ENCODE measurements at regions of chr5 and their contacts with region 1.

Region 1: GRCh38 chr5:142611154-142611553 is 74.7 kb downstream of the FGF1 start:
- DNase-seq: peak; percentile 68 to 69
- ATAC-seq: peak; percentile 93 to 98
- H3K4me3 ChIP-seq: no peak overlapping the region
- H3K27ac ChIP-seq: no peak overlapping the region
- H3K4me1 ChIP-seq: 0 out of 3 replicates have a peak, but pooled peaks cover 5% of the 10 kb centered on the region
- CTCF ChIP-seq: peak; percentile 93
- EP300 ChIP-seq: no peak
- POLR2A ChIP-seq: no peak
- RAD21 ChIP-seq: peak; percentile 95 to 96

Region 2: DNA sequence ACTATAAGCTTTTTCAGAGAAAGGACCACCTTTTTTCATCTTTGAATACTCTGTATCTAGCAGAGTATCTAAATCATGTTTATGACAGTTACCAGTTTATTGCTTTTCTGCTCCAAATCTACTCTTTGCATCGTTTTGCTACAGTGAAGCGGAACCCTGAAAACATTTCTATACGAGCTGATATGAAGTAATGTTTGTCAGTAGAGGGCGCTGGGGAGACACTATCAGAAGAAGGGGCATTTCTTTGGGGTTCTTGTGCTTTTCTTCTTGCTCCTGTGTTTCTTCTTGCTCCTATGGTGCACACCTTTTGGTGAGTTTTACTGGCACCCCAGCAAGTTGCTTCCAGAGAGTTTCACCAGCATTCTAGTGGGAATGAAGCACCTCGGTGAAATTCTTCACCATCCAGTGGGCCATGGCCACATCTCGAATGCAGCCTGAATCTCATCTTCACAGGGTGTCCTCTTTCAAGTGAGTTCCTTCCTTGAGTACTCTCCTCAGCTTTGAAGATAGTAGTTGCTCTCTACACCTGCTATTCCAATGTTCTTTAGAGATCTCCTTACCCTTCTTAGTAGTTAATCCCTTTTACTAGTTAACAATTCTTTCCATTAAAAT is 23.7 kb before region 1 on chr5:
- CTCF ChIA-PET with region 1: interaction called, 11 read pairs
- POLR2A ChIA-PET with region 1: no interaction called
- DNase-seq: peak; percentile 22 to 52
- ATAC-seq: peak; percentile 64 to 78; a peak in 5 of 6 replicates
- H3K4me3 ChIP-seq: no peak overlapping the region
- H3K27ac ChIP-seq: no peak overlapping the region
- H3K4me1 ChIP-seq: no peaks in the 10 kb centered on the region
- CTCF ChIP-seq: peak; percentile 77
- EP300 ChIP-seq: no peak
- POLR2A ChIP-seq: no peak
- RAD21 ChIP-seq: peak; percentile 59 to 70

Region 3: DNA sequence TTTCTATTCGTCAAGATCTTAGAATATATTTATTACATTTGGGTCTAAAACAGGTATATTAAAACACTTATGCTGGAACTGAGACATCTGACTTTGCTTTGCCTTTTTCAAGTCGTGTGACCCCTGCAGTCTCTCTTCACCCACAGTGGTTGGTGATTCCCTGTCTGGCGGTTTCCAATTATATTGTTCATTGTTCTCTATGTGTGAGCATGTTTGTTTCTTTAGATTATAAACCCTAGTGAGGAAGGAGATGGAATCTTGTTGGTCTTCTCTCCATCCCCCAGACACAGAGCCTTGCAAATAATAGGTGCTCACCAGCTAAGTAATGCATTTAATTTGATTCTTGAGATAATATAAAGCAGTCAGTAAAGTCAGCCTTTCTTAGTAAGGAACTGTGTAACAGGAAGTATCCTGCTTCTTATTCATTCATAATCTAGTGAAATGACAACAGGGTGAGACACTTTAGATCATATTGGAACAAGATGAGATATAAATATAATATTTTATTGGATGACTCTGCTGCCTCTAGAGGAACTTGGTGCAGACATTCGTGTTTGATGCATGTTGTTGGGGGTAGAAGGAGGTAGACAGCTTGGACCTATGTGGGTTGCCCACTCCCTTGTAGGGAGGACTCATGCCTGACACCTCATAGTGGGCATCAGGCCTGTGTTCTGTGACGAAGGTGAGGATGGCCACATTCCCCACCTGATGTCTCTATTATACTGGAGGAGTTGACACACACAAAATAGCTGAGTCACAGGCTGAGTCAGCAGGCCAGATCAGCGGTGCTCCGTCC is 13.4 kb before region 1 on chr5:
- CTCF ChIA-PET with region 1: interaction called, 41 read pairs
- POLR2A ChIA-PET with region 1: no interaction called
- DNase-seq: peak; percentile 50 to 85
- ATAC-seq: peak; percentile 83 to 85
- H3K4me3 ChIP-seq: no peak overlapping the region
- H3K27ac ChIP-seq: peak overlapping the region; percentile 83 to 85
- H3K4me1 ChIP-seq: peaks cover 51% of the 10 kb centered on the region
- CTCF ChIP-seq: peak; percentile 20; the same call in 1 of the 3 replicates
- EP300 ChIP-seq: no peak
- POLR2A ChIP-seq: no peak
- RAD21 ChIP-seq: no peak

Region 4: DNA sequence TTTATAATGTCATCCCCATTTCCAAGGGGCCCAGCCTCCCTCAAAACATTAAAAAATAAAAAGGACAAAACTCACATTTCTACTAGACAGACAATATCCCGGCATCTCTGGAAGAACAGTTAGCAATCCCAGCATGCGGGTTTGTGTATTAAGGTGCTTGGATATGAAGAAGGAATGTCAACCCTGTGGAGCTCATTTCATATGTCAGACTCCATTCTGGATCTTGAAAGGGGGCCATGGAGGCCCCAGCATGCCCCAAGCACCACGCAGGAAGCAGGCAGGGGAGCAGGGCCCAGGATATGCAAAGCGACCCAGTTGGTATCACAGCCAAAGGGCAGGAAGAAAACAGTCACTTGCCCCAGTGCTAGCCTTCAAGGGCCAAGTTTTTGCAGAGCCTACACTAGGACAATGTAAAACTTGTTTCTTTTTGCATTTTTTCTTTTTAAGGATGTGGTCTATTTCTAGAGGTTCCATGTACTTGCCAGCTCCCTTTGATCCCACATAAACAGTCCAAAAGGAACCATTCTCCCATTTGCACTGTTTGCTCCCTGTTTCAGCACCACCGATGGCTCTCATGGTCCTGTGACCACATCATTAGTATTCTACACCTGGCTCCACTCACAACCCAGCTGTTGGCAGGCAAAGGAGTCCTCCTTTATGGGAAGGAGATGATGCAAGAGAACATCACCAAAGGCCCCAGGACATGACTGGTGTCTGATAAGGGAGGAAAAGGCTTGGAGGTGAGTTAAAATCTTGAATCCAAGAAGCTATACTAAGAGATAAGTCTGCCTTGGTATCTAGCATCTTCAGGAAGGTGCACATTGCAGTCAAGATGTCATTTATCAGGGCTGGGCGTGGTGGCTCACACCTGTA is 16.5 kb after region 1 on chr5:
- CTCF ChIA-PET with region 1: interaction called, 22 read pairs
- POLR2A ChIA-PET with region 1: no interaction called
- DNase-seq: no peak
- ATAC-seq: no peak
- H3K4me3 ChIP-seq: no peak overlapping the region
- H3K27ac ChIP-seq: no peak overlapping the region
- H3K4me1 ChIP-seq: no peaks in the 10 kb centered on the region
- CTCF ChIP-seq: no peak
- EP300 ChIP-seq: no peak
- POLR2A ChIP-seq: no peak
- RAD21 ChIP-seq: no peak

Region 5: GRCh38 chr5:142644640-142645361 is 33.6 kb after region 1 on chr5:
- CTCF ChIA-PET with region 1: interaction called, 54 read pairs
- POLR2A ChIA-PET with region 1: no interaction called
- DNase-seq: peak; percentile 83 to 85
- ATAC-seq: peak; percentile 94 to 97
- H3K4me3 ChIP-seq: no peak overlapping the region
- H3K27ac ChIP-seq: peak overlapping the region; percentile 3 to 77; a peak in 4 of 6 replicates
- H3K4me1 ChIP-seq: peaks cover 18% of the 10 kb centered on the region
- CTCF ChIP-seq: no peak
- EP300 ChIP-seq: no peak
- POLR2A ChIP-seq: no peak
- RAD21 ChIP-seq: no peak

Region 6: GRCh38 chr5:142674531-142675469 is 63.6 kb after region 1 on chr5:
- CTCF ChIA-PET with region 1: interaction called, 15 read pairs
- POLR2A ChIA-PET with region 1: no interaction called
- DNase-seq: no peak
- ATAC-seq: no peak
- H3K4me3 ChIP-seq: no peak overlapping the region
- H3K27ac ChIP-seq: no peak overlapping the region
- H3K4me1 ChIP-seq: peaks cover 10% of the 10 kb centered on the region; the same call in 2 of the 3 replicates
- CTCF ChIP-seq: no peak
- EP300 ChIP-seq: no peak
- POLR2A ChIP-seq: no peak
- RAD21 ChIP-seq: no peak

Region 7: GRCh38 chr5:142685418-142686209 is 74.5 kb after region 1 on chr5 and contains the start of gene FGF1:
- CTCF ChIA-PET with region 1: interaction called, 12 read pairs
- POLR2A ChIA-PET with region 1: no interaction called
- DNase-seq: no peak
- ATAC-seq: peak in 1 of 2 experiments; percentile 35; a peak in 3 of 6 replicates
- H3K4me3 ChIP-seq: no peak within 1 kb of the TSS
- H3K27ac ChIP-seq: no peak within 1 kb of the TSS
- H3K4me1 ChIP-seq: peaks cover 11% of the 10 kb centered on the region
- CTCF ChIP-seq: no peak
- EP300 ChIP-seq: no peak
- POLR2A ChIP-seq: no peak
- RAD21 ChIP-seq: no peak
- polyA plus RNA-seq, gene FGF1: 0.05 and 0.15 TPM in 2 replicates

Measured in A549 (cell line).